Esophagus muscularis mucosa (tissue), 4 donors: ENCODE measurements at regions of chr2 and their contacts with region 1.

Region 1: GRCh38 chr2:30231212-30231995 is at the start of gene LBH:
- DNase-seq: peak; percentile 98
- H3K4me3 ChIP-seq: peak within 1 kb of the TSS; percentile 72 to 96 (median 82)
- H3K27ac ChIP-seq: peak within 1 kb of the TSS; percentile 90 to 95 (median 92)
- H3K4me1 ChIP-seq: peaks cover 33 to 57% (median 50%) of the 10 kb centered on the region in 4 donors
- H3K27me3 ChIP-seq: no peaks in the 10 kb centered on the region
- CTCF ChIP-seq: no peak
- EP300 ChIP-seq: no peak
- POLR2A ChIP-seq: peak; percentile 98
- total RNA-seq, gene LBH: 120 to 1,007 (median 283) TPM

Region 2: GRCh38 chr2:30346471-30347169 is 115.2 kb after region 1 on chr2:
- intact Hi-C with region 1: loop called (anchors 5 kb)
- DNase-seq: no peak
- H3K4me3 ChIP-seq: peak overlapping the region; percentile 35 to 57 (median 44)
- H3K27ac ChIP-seq: peak overlapping the region; percentile 74 to 79 (median 76)
- H3K4me1 ChIP-seq: peaks cover 27 to 36% (median 31%) of the 10 kb centered on the region in 4 donors
- H3K27me3 ChIP-seq: no peaks in the 10 kb centered on the region
- CTCF ChIP-seq: no peak
- EP300 ChIP-seq: no peak
- POLR2A ChIP-seq: no peak